Right cardiac atrium (tissue), 5 donors: ENCODE measurements at regions of chr5 and their contacts with region 1.

Region 1: GRCh38 chr5:89147031-89147430 is 264.0 kb upstream of the MEF2C start:
- DNase-seq: no peak
- ATAC-seq: no peak
- H3K4me3 ChIP-seq: no peak overlapping the region
- H3K27ac ChIP-seq: no peak overlapping the region
- H3K4me1 ChIP-seq: no peaks in the 10 kb centered on the region
- H3K27me3 ChIP-seq: no peaks in the 10 kb centered on the region

Region 2: DNA sequence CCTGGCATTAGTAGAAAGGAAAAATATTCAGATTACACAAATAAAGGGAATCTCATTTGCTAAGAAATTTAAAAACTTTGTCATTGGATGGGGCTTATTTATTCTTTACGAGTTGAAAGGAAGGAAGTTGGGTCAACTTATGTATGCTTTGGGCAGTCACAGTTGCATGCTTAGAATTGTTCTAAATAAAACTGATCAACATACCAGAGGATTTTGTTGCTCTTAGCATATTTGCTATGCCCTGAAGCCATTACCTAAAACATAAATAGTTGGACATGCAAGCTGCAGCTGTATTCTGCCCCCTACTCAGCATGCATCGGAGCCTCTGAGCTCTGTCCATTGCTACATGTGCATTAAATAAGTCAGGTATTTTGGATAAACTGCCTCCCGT is 91.3 kb before region 1 on chr5:
- intact Hi-C with region 1: no loop called
- DNase-seq: no peak
- ATAC-seq: no peak
- H3K4me3 ChIP-seq: no peak overlapping the region
- H3K27ac ChIP-seq: no peak overlapping the region
- H3K4me1 ChIP-seq: no peaks in the 10 kb centered on the region
- H3K27me3 ChIP-seq: no peaks in the 10 kb centered on the region

Region 3: GRCh38 chr5:89081360-89081759 is 65.7 kb before region 1 on chr5:
- intact Hi-C with region 1: no loop called
- DNase-seq: no peak
- ATAC-seq: no peak
- H3K4me3 ChIP-seq: no peak overlapping the region
- H3K27ac ChIP-seq: no peak overlapping the region
- H3K4me1 ChIP-seq: no peaks in the 10 kb centered on the region
- H3K27me3 ChIP-seq: no peaks in the 10 kb centered on the region

Region 4: DNA sequence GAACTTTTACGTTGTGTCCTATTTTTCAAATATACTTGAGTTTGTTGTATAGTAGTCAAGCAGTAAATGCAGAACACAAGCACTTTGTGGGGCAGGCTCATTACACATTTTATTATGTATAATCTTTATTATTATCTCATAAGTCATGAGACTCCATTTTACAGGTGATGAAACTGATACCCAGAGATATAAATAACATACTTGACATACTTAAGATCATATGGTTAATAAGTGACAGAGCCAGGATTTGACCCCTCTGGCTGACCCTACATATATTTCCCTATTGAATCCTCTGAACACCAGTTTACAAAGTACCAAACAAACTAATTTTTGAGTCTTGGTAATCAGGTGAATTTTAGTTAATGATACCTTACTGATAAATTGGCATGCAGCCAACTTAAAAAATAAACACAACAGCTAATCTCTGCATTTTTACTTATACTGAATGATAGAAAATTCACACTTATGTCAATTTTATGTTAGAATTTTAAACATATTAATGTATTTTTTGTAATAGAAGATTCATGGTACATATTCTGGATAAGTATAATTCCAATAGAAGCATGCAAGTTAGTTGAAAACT is 40.9 kb after region 1 on chr5:
- intact Hi-C with region 1: loop called in 1 of 4 experiments (anchors 2 kb)
- DNase-seq: no peak
- ATAC-seq: no peak
- H3K4me3 ChIP-seq: no peak overlapping the region
- H3K27ac ChIP-seq: no peak overlapping the region
- H3K4me1 ChIP-seq: no peaks in the 10 kb centered on the region
- H3K27me3 ChIP-seq: no peaks in the 10 kb centered on the region